Prostate gland (tissue), 2 donors: ENCODE measurements at regions of chr2 and their contacts with region 1.

Region 1: DNA sequence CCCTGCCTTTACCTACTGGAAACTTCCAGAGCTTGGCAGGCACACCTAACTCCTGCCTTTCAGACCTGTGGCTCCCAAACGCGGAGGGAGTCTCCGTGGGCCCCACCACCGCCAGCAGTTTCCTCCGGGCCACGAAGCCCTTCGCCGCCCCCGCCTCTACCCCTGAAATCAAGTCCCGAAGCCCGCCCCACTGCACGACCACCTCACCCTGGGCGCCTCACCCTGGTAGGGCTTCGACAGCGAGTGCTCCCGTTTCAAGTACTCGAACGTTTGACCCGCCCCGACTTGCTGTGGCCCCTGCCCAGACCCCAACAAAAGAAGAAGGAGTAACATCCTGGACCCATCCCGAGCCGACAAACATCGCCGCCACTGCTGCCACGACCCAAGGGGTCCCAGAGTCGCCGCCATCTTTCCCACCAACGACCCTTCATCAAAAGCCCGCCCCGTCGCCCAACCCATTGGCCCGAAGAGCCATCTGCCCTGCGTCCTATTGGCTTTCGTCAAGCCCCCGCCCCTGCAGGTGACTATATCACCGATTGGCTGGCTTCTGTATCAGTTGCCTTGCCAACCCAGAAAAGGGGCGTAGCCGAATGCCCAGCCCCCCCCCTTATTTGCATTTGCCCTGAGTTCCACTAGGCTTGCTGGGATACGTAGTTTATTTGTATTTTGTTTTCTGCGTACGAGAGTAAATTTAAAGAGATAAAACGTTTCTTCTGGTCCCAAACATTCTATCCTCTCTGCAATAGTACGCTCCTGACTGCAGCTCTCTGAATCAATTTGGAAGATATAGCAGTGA is at the start of gene LMAN2L:
- DNase-seq: peak; percentile 97
- H3K4me3 ChIP-seq: peak within 1 kb of the TSS; percentile 65 to 67
- H3K27ac ChIP-seq: peak within 1 kb of the TSS; percentile 57 to 68
- H3K4me1 ChIP-seq: peaks cover 6% of the 10 kb centered on the region
- H3K27me3 ChIP-seq: no peaks in the 10 kb centered on the region
- CTCF ChIP-seq: peak in 2 of 4 experiments; percentile 28 to 44
- POLR2A ChIP-seq: peak; percentile 67
- total RNA-seq, gene LMAN2L: 26.1 to 26.8 TPM

Region 2: DNA sequence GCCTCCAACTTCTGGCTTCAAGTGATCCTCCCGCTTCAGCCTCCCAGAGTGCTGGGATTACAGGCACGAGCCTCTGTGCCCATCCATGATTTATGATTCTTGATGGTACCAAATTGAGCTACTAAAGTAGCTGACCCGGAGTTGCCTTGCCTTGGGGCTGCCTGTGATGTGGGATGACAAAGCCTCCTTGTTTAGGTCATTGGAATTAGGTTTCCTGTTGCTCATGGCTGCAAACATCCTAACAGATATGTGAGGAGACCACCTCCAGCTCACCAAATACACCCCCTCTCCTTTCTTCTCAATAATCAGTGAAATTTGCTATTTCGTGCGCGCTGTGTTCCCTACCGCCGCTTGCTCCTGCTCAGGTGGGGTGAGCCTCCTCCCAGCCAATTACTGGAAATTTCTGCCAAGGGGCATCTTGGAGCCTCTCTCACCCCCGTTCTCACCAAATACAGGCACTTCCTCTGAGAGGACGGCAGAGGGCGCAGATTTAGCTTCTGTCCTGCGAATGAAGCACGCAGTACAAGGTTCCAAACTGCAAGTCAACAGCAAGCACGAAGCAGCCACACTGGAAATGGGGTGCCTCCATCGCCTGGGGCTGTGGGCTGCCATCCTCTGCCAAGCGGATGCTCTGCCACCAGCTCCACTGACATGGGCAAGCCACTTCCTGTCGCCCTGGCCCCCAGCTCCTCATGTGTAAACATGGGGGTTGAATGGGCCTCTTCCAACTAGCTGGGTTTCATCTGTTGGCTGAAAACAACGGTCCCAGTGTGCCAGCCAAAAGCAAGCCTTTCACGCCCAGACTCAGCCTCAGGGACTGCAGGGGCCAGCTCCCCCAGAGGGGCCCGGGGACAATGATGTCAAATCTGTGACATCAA is 332.6 kb before region 1 on chr2:
- intact Hi-C with region 1: no loop called
- DNase-seq: peak; percentile 91
- H3K4me3 ChIP-seq: no peak overlapping the region
- H3K27ac ChIP-seq: peak overlapping the region; percentile 30 to 33
- H3K4me1 ChIP-seq: no peaks in the 10 kb centered on the region
- H3K27me3 ChIP-seq: no peaks in the 10 kb centered on the region
- CTCF ChIP-seq: peak; percentile 68 to 91 (median 86)
- POLR2A ChIP-seq: no peak

Region 3: GRCh38 chr2:96574364-96574763 is 165.5 kb before region 1 on chr2:
- intact Hi-C with region 1: no loop called
- DNase-seq: no peak
- H3K4me3 ChIP-seq: no peak overlapping the region
- H3K27ac ChIP-seq: no peak overlapping the region
- H3K4me1 ChIP-seq: no peaks in the 10 kb centered on the region
- H3K27me3 ChIP-seq: no peaks in the 10 kb centered on the region
- CTCF ChIP-seq: no peak
- POLR2A ChIP-seq: no peak

Region 4: DNA sequence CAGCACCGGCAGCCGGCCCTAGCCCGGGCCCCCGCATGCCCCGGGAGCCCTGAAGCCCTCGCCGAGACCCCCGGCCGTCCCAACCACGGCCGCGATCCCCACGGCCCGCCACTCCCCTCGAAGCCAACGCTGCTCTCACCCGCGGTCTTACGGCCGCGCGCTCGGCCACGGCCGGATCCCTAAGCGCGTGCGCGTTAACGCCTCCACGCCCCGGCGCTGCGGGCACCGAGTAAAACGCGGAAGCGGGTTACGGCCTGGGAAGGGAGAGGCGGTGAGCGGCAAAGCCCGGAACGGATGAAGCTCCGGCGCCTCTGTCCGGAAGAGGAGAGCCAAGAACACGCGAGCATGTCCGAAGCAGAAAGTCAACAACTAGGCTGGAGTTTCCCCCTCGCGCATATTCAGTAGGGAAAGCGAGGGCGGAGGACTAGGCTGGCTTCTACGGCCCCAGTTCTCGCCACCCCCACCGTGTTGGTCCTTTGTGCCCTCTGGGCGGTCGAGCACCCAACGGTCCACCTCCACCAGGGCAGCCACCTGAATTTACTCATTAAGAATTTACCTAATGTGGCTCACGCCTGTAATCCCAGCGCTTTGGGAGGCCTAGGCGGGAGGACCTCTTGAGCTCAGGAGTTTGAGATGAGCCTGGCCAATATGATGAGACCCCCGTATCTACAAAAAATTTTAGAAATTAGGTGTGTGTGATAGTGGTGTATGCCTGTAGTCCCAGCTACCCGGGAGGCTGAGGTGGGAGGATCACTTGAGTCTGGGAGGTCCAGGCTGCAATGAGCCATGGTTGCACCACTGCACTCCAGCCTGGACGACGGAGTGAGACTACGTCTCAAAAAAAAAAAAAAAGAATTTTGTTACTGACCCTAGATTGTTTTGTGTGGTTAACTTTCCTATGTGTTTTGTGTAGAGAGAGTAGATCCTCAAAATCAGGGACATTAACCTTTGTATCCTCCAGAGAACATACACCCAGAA is 101.4 kb before region 1 on chr2 and contains the start of gene KANSL3:
- intact Hi-C with region 1: loop called (anchors 10 kb)
- DNase-seq: peak; percentile 85
- H3K4me3 ChIP-seq: peak within 1 kb of the TSS; percentile 82 to 89
- H3K27ac ChIP-seq: peak within 1 kb of the TSS; percentile 92 to 96
- H3K4me1 ChIP-seq: no peaks in the 10 kb centered on the region
- H3K27me3 ChIP-seq: no peaks in the 10 kb centered on the region
- CTCF ChIP-seq: peak in 2 of 4 experiments; percentile 19 to 39
- POLR2A ChIP-seq: peak; percentile 91
- total RNA-seq, gene KANSL3: 41.3 to 70.0 TPM

Region 5: GRCh38 chr2:96801005-96801785 is 61.4 kb after region 1 on chr2:
- intact Hi-C with region 1: no loop called
- DNase-seq: peak; percentile 83
- H3K4me3 ChIP-seq: no peak overlapping the region
- H3K27ac ChIP-seq: no peak overlapping the region
- H3K4me1 ChIP-seq: no peaks in the 10 kb centered on the region
- H3K27me3 ChIP-seq: no peaks in the 10 kb centered on the region
- CTCF ChIP-seq: peak; percentile 75 to 95 (median 84)
- POLR2A ChIP-seq: no peak